MCF 10A (cell line): ENCODE measurements at regions of chr2 and their contacts with region 1.

Region 1: DNA sequence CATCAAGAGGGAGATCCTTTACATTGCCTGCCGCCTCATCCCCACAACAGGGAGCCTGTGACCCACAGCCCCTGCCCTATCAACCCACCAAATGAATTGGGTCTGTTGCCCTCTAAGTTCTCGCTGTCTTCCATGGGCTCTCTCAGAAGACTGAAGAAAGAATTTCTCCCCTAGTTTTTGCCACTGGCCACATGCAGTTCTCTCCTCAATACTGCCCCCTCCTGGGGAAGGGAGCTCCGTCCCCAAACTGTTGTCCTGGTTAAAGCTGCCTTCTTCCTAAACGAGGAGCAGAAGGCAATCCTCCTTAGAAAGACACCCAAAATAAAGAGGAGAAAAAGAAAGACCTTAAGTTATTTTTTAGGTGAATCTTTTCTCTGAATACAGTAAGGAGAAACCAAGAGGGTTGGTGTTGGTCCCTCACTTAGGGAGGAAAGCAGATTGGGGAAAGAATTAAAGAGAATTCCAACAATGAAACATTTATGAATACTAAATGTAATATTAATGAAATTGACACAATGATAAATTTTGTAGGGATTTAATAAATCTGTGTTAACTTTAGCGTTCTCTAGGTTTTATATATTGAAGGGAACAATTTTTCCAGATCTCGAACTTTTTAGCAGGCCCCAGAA is 31.1 kb upstream of the SATB2 start:
- DNase-seq: peak; percentile 77
- H3K4me3 Mint-ChIP-seq: no peak overlapping the region
- H3K27ac Mint-ChIP-seq: no peak overlapping the region
- H3K4me1 Mint-ChIP-seq: no peaks in the 10 kb centered on the region
- H3K27me3 Mint-ChIP-seq: peaks cover 20% of the 10 kb centered on the region
- CTCF ChIP-seq: peak; percentile 72

Region 2: DNA sequence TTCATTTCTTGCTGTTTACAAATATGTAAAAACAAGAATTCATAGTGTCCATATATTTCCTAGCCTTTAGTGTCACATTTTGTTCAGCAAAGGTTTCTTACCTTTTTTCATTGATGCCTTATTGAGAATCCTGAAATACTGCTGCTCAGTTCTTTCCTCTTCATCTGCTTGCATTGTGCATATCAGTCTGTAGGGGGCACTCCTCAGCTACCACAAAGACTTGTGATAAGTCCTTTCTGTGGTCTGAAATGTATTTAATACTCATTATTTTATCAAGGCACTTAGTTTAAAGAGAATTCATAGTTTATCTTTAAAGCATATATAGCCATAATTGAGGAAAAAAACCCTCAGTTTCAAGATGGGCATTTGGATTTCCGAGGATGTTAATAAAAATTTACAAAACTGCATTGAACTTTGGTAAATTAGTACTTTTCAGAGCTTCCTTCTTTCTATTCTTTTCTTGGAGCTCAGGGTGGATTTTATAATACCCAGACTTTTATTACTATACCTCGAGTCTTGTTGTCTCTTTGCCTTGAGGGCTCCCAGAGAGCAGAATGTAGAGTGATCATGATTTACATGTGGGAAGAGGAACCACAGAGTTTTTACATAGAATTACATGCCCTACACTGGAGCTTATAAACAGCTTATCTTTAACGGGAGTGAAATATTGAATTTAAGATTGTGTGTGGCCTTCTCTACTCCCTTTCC is 1114.4 kb before region 1 on chr2:
- CTCF ChIA-PET with region 1: interaction called, 4 read pairs
- POLR2A ChIA-PET with region 1: no interaction called
- intact Hi-C with region 1: loop called (anchors 1 kb)
- DNase-seq: peak; percentile 77
- H3K4me3 Mint-ChIP-seq: no peak overlapping the region
- H3K27ac Mint-ChIP-seq: no peak overlapping the region
- H3K4me1 Mint-ChIP-seq: no peaks in the 10 kb centered on the region
- H3K27me3 Mint-ChIP-seq: peaks cover 61% of the 10 kb centered on the region
- CTCF ChIP-seq: peak; percentile 62

Region 3: DNA sequence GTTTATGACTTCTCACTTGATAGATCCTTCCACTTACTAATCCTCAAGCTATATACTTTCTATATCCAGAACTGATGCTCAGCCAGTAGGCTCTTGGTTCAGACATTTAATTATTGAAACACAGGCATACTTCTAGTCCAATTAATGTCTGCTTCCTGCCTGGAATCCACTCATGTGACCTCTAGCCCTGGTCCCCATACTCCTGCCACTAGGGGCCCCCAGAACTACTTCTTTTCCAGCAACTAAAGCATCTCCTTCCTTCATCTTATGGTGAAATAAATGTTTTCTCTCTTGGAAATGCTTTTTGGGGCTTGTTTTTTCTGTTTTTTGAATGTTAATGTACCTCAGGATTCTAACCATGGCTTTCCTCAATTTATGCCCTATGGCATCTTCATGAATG is 558.7 kb before region 1 on chr2:
- CTCF ChIA-PET with region 1: interaction called, 3 read pairs
- POLR2A ChIA-PET with region 1: no interaction called
- intact Hi-C with region 1: loop called (anchors 2 kb)
- DNase-seq: peak; percentile 19
- H3K4me3 Mint-ChIP-seq: no peak overlapping the region
- H3K27ac Mint-ChIP-seq: no peak overlapping the region
- H3K4me1 Mint-ChIP-seq: no peaks in the 10 kb centered on the region
- H3K27me3 Mint-ChIP-seq: peaks cover 55% of the 10 kb centered on the region
- CTCF ChIP-seq: peak; percentile 27

Region 4: DNA sequence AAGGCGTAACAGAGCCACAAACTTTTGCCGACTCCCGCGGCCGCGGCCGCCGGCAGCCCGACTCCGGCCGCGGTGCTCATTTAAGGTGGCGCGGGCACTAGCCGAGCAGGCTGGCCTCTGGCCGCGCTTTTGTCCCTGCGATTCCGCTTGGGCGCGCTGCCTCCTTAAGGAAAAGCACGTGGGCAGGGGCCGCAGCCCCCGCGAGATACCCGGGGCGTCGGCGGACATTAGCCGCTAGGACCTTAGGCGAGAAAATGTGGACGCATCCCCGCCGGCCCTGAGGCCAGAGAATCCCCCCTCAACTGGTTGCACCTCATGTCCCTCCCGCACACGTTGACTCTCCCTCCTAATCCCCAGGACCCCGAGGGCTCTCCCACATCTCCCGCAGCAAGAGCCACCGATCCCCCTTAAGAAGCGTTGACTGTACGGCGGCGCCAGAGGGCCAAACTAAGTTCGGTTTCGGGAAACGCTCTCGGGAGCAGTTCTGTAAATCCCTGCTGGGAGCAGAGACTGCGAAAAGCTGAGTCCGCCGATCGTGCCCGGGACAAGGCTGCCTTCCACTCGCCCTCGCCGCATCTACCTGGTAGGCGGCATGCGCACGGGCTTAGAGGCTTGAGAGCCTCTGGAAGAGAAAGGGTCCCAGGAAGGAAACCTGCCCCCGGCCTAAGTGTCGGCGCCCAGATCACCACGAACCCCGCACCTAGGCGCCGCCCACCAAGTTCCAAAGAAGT is 29.4 kb before region 1 on chr2:
- CTCF ChIA-PET with region 1: interaction called, 18 read pairs
- POLR2A ChIA-PET with region 1: no interaction called
- intact Hi-C with region 1: no loop called
- DNase-seq: peak; percentile 94
- H3K4me3 Mint-ChIP-seq: peak overlapping the region; percentile 77
- H3K27ac Mint-ChIP-seq: peak overlapping the region; percentile 84
- H3K4me1 Mint-ChIP-seq: peaks cover 5% of the 10 kb centered on the region
- H3K27me3 Mint-ChIP-seq: no peaks in the 10 kb centered on the region
- CTCF ChIP-seq: no peak

Region 5: DNA sequence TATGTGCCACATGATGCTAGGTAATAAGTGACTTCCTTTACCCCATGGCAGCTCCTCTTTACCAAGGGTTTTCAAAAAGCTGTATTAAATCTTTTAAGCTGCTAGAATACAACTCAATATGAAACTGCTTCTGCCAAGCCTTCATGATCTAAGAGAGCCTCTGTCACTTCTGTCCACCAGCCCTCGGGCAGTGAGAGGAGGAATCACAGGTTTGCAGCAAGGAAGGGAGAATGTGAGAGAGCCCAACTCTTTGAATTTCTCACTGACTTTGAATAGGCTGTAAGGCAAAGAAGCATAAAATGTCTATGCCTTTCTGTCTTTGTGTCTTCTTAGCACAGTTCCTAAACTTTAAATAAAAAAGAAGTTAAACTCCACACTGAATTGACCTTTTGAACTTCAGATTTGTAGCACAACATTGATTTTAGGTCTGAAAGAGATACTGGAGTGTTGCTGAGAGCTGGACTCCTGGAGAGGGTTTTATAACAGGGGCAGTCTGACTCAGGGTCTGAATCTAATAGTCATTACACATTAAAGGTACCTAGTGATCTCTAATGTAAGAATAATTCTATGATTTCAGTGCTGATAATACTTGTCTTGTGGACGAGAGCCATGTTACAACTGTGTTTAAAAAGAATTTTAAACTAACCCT is 17.0 kb after region 1 on chr2:
- CTCF ChIA-PET with region 1: interaction called, 14 read pairs
- POLR2A ChIA-PET with region 1: no interaction called
- intact Hi-C with region 1: no loop called
- DNase-seq: no peak
- H3K4me3 Mint-ChIP-seq: no peak overlapping the region
- H3K27ac Mint-ChIP-seq: no peak overlapping the region
- H3K4me1 Mint-ChIP-seq: no peaks in the 10 kb centered on the region
- H3K27me3 Mint-ChIP-seq: peaks cover 59% of the 10 kb centered on the region
- CTCF ChIP-seq: no peak

Region 6: GRCh38 chr2:199842631-199843395 is 353.9 kb after region 1 on chr2:
- CTCF ChIA-PET with region 1: no interaction called
- POLR2A ChIA-PET with region 1: no interaction called
- intact Hi-C with region 1: no loop called
- DNase-seq: no peak
- H3K4me3 Mint-ChIP-seq: no peak overlapping the region
- H3K27ac Mint-ChIP-seq: no peak overlapping the region
- H3K4me1 Mint-ChIP-seq: peaks cover 6% of the 10 kb centered on the region
- H3K27me3 Mint-ChIP-seq: peaks cover 50% of the 10 kb centered on the region
- CTCF ChIP-seq: no peak